ENCODE measurements at regions of chr1 and their contacts with region 1.

Region 1: DNA sequence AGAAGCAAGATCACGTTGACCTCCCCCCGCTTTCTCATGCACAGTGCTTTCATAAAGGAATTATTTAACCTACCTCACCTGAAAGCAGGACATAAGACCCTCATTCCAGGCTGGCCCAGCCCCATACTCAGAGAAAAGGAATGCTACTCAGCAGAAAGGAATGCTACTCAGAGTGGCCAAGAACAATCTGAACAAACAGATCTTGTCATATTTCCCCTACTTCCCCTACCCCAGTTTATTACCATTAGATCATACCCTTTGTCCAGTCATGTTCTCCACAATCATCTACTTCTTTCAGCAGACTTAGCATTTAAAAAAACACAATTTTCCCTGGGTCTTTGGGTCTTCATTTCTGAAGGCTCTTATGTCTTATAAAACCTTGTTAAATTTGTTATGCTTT is 89.8 kb downstream of the SLC16A1 start:
- DNase-seq: peak; percentile 94
- H3K4me3 ChIP-seq: no peak overlapping the region
- H3K27ac ChIP-seq: peak overlapping the region; percentile 97
- H3K4me1 ChIP-seq: peaks cover 43% of the 10 kb centered on the region
- H3K27me3 ChIP-seq: no peaks in the 10 kb centered on the region
- CTCF ChIP-seq: no peak
- POLR2A ChIP-seq: peak; percentile 76

Region 2: GRCh38 chr1:112809253-112809684 is 56.9 kb before region 1 on chr1:
- CTCF ChIA-PET with region 1: interaction called, 13 read pairs
- POLR2A ChIA-PET with region 1: no interaction called
- dilution Hi-C with region 1: no loop called
- intact Hi-C with region 1: loop called (anchors 1 kb)
- DNase-seq: peak; percentile 80
- H3K4me3 ChIP-seq: no peak overlapping the region
- H3K27ac ChIP-seq: no peak overlapping the region
- H3K4me1 ChIP-seq: peaks cover 3% of the 10 kb centered on the region
- H3K27me3 ChIP-seq: no peaks in the 10 kb centered on the region
- CTCF ChIP-seq: peak; percentile 94 to 96
- POLR2A ChIP-seq: no peak

Region 3: DNA sequence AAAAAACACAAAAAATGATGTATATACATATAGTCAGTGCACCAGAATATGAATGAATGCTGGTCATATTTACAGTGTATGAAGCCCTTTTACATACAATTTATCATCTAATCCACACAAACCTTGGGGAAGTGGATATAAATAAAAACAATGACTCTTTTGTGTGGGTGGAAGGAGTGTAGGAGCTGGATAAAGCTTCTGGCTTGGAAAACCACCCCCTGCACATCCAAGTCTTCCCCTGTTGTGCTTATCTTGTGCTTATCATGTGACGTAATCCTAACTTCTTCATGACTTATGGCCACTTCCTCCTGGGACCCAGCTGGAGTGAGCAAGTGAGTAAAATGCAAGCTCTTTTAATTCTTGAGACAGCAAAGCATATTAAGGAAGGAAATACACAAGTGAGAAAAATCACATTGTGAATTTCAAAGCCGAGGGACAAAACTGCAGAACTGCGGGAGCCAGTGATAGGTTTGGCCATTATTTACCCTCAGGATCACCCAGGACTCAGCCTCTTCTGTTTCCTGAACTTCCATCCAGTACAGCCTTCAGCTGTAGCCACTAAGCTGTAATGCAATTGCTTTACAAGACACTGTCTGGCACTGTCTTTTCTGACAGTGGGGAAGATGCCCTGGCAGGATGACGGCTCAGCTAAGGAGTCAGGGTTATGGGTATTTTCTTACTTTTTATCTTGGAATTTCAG is 47.0 kb before region 1 on chr1:
- CTCF ChIA-PET with region 1: interaction called, 7 read pairs
- POLR2A ChIA-PET with region 1: interaction called, 5 read pairs
- dilution Hi-C with region 1: no loop called
- intact Hi-C with region 1: loop called (anchors 1 kb)
- DNase-seq: peak; percentile 95
- H3K4me3 ChIP-seq: peak overlapping the region in 1 of 3 experiments; percentile 43
- H3K27ac ChIP-seq: peak overlapping the region; percentile 93
- H3K4me1 ChIP-seq: peaks cover 31% of the 10 kb centered on the region
- H3K27me3 ChIP-seq: no peaks in the 10 kb centered on the region
- CTCF ChIP-seq: no peak
- POLR2A ChIP-seq: peak; percentile 18

Region 4: GRCh38 chr1:112849425-112850033 is 16.6 kb before region 1 on chr1:
- CTCF ChIA-PET with region 1: no interaction called
- POLR2A ChIA-PET with region 1: no interaction called
- dilution Hi-C with region 1: no loop called
- intact Hi-C with region 1: loop called (anchors 1 kb)
- DNase-seq: peak; percentile 90
- H3K4me3 ChIP-seq: peak overlapping the region; percentile 28 to 61 (median 59)
- H3K27ac ChIP-seq: peak overlapping the region; percentile 50
- H3K4me1 ChIP-seq: peaks cover 11% of the 10 kb centered on the region
- H3K27me3 ChIP-seq: no peaks in the 10 kb centered on the region
- CTCF ChIP-seq: no peak
- POLR2A ChIP-seq: no peak

Region 5: GRCh38 chr1:112855152-112855828 is 10.9 kb before region 1 on chr1:
- CTCF ChIA-PET with region 1: interaction called, 4 read pairs
- POLR2A ChIA-PET with region 1: no interaction called
- dilution Hi-C with region 1: no loop called
- intact Hi-C with region 1: loop called (anchors 1 kb)
- DNase-seq: no peak
- H3K4me3 ChIP-seq: no peak overlapping the region
- H3K27ac ChIP-seq: no peak overlapping the region
- H3K4me1 ChIP-seq: peaks cover 13% of the 10 kb centered on the region
- H3K27me3 ChIP-seq: no peaks in the 10 kb centered on the region
- CTCF ChIP-seq: no peak
- POLR2A ChIP-seq: no peak

Region 6: GRCh38 chr1:112911506-112911905 is 45.4 kb after region 1 on chr1:
- CTCF ChIA-PET with region 1: no interaction called
- POLR2A ChIA-PET with region 1: no interaction called
- dilution Hi-C with region 1: no loop called
- intact Hi-C with region 1: no loop called
- DNase-seq: no peak
- H3K4me3 ChIP-seq: no peak overlapping the region
- H3K27ac ChIP-seq: no peak overlapping the region
- H3K4me1 ChIP-seq: peaks cover 14% of the 10 kb centered on the region
- H3K27me3 ChIP-seq: no peaks in the 10 kb centered on the region
- CTCF ChIP-seq: no peak
- POLR2A ChIP-seq: no peak

Measured in endothelial cell of umbilical vein (primary cell).